Cardiac septum (tissue), 1 donor: ENCODE measurements at regions of chr12 and their contacts with region 1.

Region 1: DNA sequence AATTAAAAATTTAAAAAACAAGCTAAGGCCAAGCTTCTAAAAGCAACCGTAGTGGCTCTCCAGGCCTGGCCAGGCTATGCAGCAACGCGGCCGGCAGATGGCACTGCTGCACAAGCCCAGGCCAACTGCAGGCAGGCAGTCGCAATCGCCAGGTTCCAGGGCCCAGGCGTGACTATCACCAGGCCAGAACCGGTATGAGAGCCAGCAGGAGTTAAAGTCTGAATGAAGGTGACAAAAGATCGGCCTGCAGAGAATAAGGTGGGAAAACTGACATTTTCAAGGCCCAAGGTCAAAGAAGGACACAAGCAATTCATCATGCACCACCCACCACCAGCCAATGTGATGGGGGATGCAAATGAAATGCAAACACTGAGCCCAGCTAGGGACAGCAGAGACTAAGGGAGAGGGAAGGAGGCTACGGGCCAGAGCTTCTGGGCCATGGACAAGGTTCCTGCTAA is 43.6 kb upstream of the ANO2 start:
- DNase-seq: peak; percentile 87

Region 2: GRCh38 chr12:5898876-5899275 is 89.8 kb before region 1 on chr12:
- intact Hi-C with region 1: no loop called
- DNase-seq: no peak

Region 3: GRCh38 chr12:5941907-5942306 is 46.8 kb before region 1 on chr12:
- intact Hi-C with region 1: no loop called
- DNase-seq: no peak

Region 4: GRCh38 chr12:6020926-6021325 is 32.2 kb after region 1 on chr12:
- intact Hi-C with region 1: no loop called
- DNase-seq: no peak

Region 5: GRCh38 chr12:6039894-6040568 is 51.3 kb after region 1 on chr12:
- intact Hi-C with region 1: loop called (anchors 2 kb)
- DNase-seq: no peak

Region 6: GRCh38 chr12:6528887-6529235 is 540.2 kb after region 1 on chr12:
- intact Hi-C with region 1: no loop called
- DNase-seq: no peak